ENCODE measurements at regions of chr1 and their contacts with region 1.

Region 1: GRCh38 chr1:116841569-116842344 is 68.0 kb upstream of the PTGFRN start:
- H3K4me3 ChIP-seq: no peak overlapping the region
- H3K27ac ChIP-seq: no peak overlapping the region
- H3K4me1 ChIP-seq: no peaks in the 10 kb centered on the region
- CTCF ChIP-seq: no peak

Region 2: DNA sequence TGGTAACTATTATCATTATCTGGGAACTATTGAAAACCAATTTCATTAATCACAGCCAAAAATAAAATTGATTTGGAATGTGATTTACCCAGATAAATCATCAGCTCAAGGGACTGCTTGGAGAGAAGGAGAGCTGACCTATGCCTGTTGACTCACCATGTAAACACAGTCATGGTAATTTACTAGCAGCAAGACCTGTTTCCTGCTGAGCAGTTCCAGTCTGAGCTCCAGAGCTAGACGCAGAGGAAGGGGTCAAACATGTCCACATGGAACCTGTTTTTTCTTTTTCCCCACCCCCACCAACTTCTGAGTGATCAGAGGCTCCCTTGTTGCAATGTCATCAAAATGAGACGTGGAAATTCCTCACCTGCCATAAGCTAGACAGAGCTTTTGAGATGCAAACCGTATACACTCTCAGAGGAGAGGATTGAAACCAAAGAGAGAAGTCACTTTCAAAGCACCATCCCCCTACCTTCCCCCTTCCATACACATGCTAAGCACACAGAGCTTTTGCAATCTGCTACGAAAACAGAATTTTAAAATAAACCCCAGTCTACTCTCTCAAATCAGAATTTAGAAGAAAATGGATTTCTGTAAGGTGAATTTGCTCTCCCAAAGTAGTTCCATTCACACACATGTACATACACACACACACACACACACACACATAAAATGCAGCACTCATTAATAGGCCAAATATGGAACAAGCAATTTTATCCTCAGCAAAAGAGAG is 12.1 kb after region 1 on chr1:
- CTCF ChIA-PET with region 1: interaction called, 4 read pairs
- POLR2A ChIA-PET with region 1: interaction called, 10 read pairs
- H3K4me3 ChIP-seq: no peak overlapping the region
- H3K27ac ChIP-seq: peak overlapping the region; percentile 20; the same call in 1 of the 2 replicates
- H3K4me1 ChIP-seq: peaks cover 28% of the 10 kb centered on the region
- CTCF ChIP-seq: no peak

Measured in HEK293 (cell line).